ENCODE measurements at regions of chr2 and their contacts with region 1.

Region 1: GRCh38 chr2:86440631-86441391 is at the start of gene KDM3A:
- DNase-seq: peak; percentile 99
- H3K4me3 Mint-ChIP-seq: peak within 1 kb of the TSS; percentile 85
- H3K27ac Mint-ChIP-seq: peak within 1 kb of the TSS; percentile 99
- H3K4me1 Mint-ChIP-seq: peaks cover 37% of the 10 kb centered on the region
- H3K27me3 Mint-ChIP-seq: no peaks in the 10 kb centered on the region
- CTCF ChIP-seq: no peak
- total RNA-seq, gene KDM3A: 21.1 and 34.6 TPM in 2 replicates

Region 2: DNA sequence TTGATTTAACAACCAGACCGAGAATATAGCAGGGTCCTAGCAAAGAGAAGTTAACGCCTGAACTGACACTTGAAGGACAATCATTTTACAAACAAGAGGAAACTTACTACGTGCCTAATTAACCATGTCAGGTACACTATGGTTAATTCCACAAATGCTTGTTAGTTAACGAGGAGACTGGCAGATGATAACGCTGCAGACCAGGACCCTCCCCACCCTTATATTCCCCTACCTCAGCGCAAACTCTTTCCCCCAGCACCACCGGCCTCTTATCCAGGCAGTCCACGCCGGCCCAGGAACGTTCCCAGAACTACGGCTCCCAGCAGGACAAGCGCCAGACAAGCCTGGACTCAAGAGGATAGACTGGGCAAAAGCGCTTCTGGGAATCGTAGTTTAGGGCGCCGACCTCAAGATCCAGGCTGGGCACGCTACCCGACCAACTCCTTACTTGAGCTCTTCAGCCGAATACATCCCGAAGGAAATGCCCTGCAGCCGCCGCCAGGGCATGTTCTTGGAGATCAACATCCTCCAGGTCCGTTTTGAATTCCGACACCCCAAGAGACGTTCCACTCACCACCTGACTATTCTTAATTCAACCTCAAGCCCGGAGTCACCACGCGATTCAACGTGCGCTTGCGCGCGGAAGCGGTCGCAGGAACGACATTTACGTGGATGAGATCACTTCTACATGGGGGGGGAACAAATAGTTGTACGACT is 335.4 kb before region 1 on chr2 and contains the start of gene POLR1A:
- CTCF ChIA-PET with region 1: no interaction called
- POLR2A ChIA-PET with region 1: interaction called, 13 read pairs
- intact Hi-C with region 1: no loop called
- DNase-seq: peak; percentile 93
- H3K4me3 Mint-ChIP-seq: peak within 1 kb of the TSS; percentile 99
- H3K27ac Mint-ChIP-seq: peak within 1 kb of the TSS; percentile 99
- H3K4me1 Mint-ChIP-seq: peaks cover 31% of the 10 kb centered on the region
- H3K27me3 Mint-ChIP-seq: no peaks in the 10 kb centered on the region
- CTCF ChIP-seq: no peak
- total RNA-seq, gene POLR1A: 46.4 and 52.7 TPM in 2 replicates

Region 3: GRCh38 chr2:86221066-86221684 is 219.6 kb before region 1 on chr2:
- CTCF ChIA-PET with region 1: interaction called, 9 read pairs
- POLR2A ChIA-PET with region 1: interaction called, 21 read pairs
- intact Hi-C with region 1: no loop called
- DNase-seq: peak; percentile 71
- H3K4me3 Mint-ChIP-seq: no peak overlapping the region
- H3K27ac Mint-ChIP-seq: no peak overlapping the region
- H3K4me1 Mint-ChIP-seq: peaks cover 9% of the 10 kb centered on the region
- H3K27me3 Mint-ChIP-seq: no peaks in the 10 kb centered on the region
- CTCF ChIP-seq: peak; percentile 90

Region 4: GRCh38 chr2:86347401-86347800 is 93.4 kb before region 1 on chr2:
- CTCF ChIA-PET with region 1: no interaction called
- POLR2A ChIA-PET with region 1: no interaction called
- intact Hi-C with region 1: no loop called
- DNase-seq: no peak
- H3K4me3 Mint-ChIP-seq: no peak overlapping the region
- H3K27ac Mint-ChIP-seq: no peak overlapping the region
- H3K4me1 Mint-ChIP-seq: no peaks in the 10 kb centered on the region
- H3K27me3 Mint-ChIP-seq: peaks cover 24% of the 10 kb centered on the region
- CTCF ChIP-seq: no peak

Region 5: GRCh38 chr2:86417961-86418360 is 22.9 kb before region 1 on chr2:
- CTCF ChIA-PET with region 1: no interaction called
- POLR2A ChIA-PET with region 1: interaction called, 24 read pairs
- intact Hi-C with region 1: no loop called
- DNase-seq: peak; percentile 49
- H3K4me3 Mint-ChIP-seq: no peak overlapping the region
- H3K27ac Mint-ChIP-seq: no peak overlapping the region
- H3K4me1 Mint-ChIP-seq: peaks cover 9% of the 10 kb centered on the region
- H3K27me3 Mint-ChIP-seq: peaks cover 11% of the 10 kb centered on the region
- CTCF ChIP-seq: no peak

Region 6: GRCh38 chr2:86453836-86454235 is 13.0 kb after region 1 on chr2:
- CTCF ChIA-PET with region 1: interaction called, 4 read pairs
- POLR2A ChIA-PET with region 1: interaction called, 52 read pairs
- intact Hi-C with region 1: no loop called
- DNase-seq: peak; percentile 97
- H3K4me3 Mint-ChIP-seq: peak overlapping the region; percentile 44
- H3K27ac Mint-ChIP-seq: peak overlapping the region; percentile 84
- H3K4me1 Mint-ChIP-seq: peaks cover 19% of the 10 kb centered on the region
- H3K27me3 Mint-ChIP-seq: no peaks in the 10 kb centered on the region
- CTCF ChIP-seq: no peak

Region 7: GRCh38 chr2:86498468-86499250 is 57.8 kb after region 1 on chr2:
- CTCF ChIA-PET with region 1: no interaction called
- POLR2A ChIA-PET with region 1: interaction called, 28 read pairs
- intact Hi-C with region 1: no loop called
- DNase-seq: peak; percentile 94
- H3K4me3 Mint-ChIP-seq: no peak overlapping the region
- H3K27ac Mint-ChIP-seq: peak overlapping the region; percentile 21
- H3K4me1 Mint-ChIP-seq: peaks cover 13% of the 10 kb centered on the region
- H3K27me3 Mint-ChIP-seq: no peaks in the 10 kb centered on the region
- CTCF ChIP-seq: no peak

Region 8: GRCh38 chr2:86623651-86624541 is 183.1 kb after region 1 on chr2 and contains the start of gene RNF103:
- CTCF ChIA-PET with region 1: no interaction called
- POLR2A ChIA-PET with region 1: interaction called, 80 read pairs
- intact Hi-C with region 1: loop called (anchors 5 kb)
- DNase-seq: peak; percentile 92
- H3K4me3 Mint-ChIP-seq: peak within 1 kb of the TSS; percentile 95
- H3K27ac Mint-ChIP-seq: peak within 1 kb of the TSS; percentile 98
- H3K4me1 Mint-ChIP-seq: peaks cover 6% of the 10 kb centered on the region
- H3K27me3 Mint-ChIP-seq: no peaks in the 10 kb centered on the region
- CTCF ChIP-seq: no peak
- total RNA-seq, gene RNF103: 12.4 and 18.4 TPM in 2 replicates

Region 9: DNA sequence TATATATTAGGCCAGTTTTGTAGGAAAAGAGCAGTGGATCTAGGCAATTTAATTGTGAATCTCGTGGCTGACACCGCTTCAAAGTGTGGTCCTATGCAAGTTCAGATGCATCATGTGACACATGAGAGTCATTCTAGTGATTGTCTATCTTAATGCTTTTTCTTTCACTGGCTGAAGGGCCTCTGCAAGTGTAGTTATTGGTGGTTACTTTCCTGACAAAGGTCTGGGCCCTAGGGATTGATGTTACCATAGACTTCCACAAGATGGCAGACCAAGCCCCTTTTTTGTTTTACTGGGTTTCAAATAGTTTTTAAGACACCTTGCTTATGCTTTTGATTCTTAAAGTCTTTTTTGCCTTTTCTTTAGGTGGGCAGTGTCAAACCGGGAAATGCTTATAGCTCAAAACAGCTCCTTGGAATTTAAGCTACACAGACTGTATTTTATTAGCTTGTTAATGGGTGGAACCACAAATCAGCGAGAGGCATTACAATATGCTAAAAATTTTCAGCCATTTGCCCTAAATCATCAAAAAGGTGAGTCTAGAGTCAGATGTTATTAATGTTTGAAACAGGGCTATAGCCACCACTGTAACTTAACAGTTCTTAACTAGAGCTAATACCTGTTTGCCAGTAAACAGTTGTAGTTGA is 324.0 kb after region 1 on chr2:
- CTCF ChIA-PET with region 1: no interaction called
- POLR2A ChIA-PET with region 1: no interaction called
- intact Hi-C with region 1: no loop called
- DNase-seq: peak; percentile 47
- H3K4me3 Mint-ChIP-seq: no peak overlapping the region
- H3K27ac Mint-ChIP-seq: no peak overlapping the region
- H3K4me1 Mint-ChIP-seq: no peaks in the 10 kb centered on the region
- H3K27me3 Mint-ChIP-seq: no peaks in the 10 kb centered on the region
- CTCF ChIP-seq: peak; percentile 49